IMR-90 (cell line): ENCODE measurements at regions of chr6 and their contacts with region 1.

Region 1: GRCh38 chr6:152804150-152804549 is 53.6 kb downstream of the VIP start:
- DNase-seq: no peak
- ATAC-seq: no peak
- H3K4me3 ChIP-seq: no peak overlapping the region
- H3K27ac ChIP-seq: no peak overlapping the region
- H3K4me1 ChIP-seq: no peaks in the 10 kb centered on the region
- H3K27me3 ChIP-seq: no peaks in the 10 kb centered on the region
- CTCF ChIP-seq: no peak
- POLR2A ChIP-seq: no peak
- RAD21 ChIP-seq: no peak

Region 2: GRCh38 chr6:152170705-152171667 is 633.2 kb before region 1 on chr6:
- CTCF ChIA-PET with region 1: no interaction called
- POLR2A ChIA-PET with region 1: no interaction called
- dilution Hi-C with region 1: no loop called
- in situ Hi-C with region 1: no loop called
- intact Hi-C with region 1: no loop called
- DNase-seq: peak; percentile 75
- ATAC-seq: peak; percentile 61
- H3K4me3 ChIP-seq: no peak overlapping the region
- H3K27ac ChIP-seq: no peak overlapping the region
- H3K4me1 ChIP-seq: no peaks in the 10 kb centered on the region
- H3K27me3 ChIP-seq: no peaks in the 10 kb centered on the region
- CTCF ChIP-seq: no peak
- POLR2A ChIP-seq: no peak
- RAD21 ChIP-seq: no peak

Region 3: GRCh38 chr6:152630832-152631231 is 173.3 kb before region 1 on chr6:
- CTCF ChIA-PET with region 1: no interaction called
- POLR2A ChIA-PET with region 1: no interaction called
- dilution Hi-C with region 1: no loop called
- in situ Hi-C with region 1: no loop called
- intact Hi-C with region 1: no loop called
- DNase-seq: no peak
- ATAC-seq: no peak
- H3K4me3 ChIP-seq: no peak overlapping the region
- H3K27ac ChIP-seq: no peak overlapping the region
- H3K4me1 ChIP-seq: peaks cover 6% of the 10 kb centered on the region; the same call in 1 of the 2 replicates
- H3K27me3 ChIP-seq: no peaks in the 10 kb centered on the region
- CTCF ChIP-seq: no peak
- POLR2A ChIP-seq: no peak
- RAD21 ChIP-seq: no peak

Region 4: DNA sequence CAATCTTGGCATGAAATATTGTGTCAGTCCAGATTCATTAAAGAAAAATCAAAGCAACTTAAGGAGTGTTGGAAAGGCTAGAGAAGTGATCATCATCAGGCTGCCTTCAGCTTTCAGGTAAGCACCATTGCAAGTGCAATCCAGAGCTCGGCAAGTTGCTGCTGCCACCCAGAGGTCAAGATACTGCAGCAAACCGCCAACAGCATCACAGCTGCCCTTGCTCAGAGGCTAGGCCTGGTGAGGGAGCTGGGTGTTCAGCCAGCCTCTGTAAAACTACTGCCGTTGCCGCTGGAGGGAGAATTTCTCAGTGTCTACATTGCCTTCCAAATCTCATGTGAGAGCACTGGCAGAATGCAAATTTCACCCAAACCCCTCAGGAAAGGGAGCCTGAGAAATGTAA is 161.2 kb before region 1 on chr6:
- CTCF ChIA-PET with region 1: no interaction called
- POLR2A ChIA-PET with region 1: no interaction called
- dilution Hi-C with region 1: no loop called
- in situ Hi-C with region 1: no loop called
- intact Hi-C with region 1: no loop called
- DNase-seq: peak; percentile 55
- ATAC-seq: peak; percentile 98
- H3K4me3 ChIP-seq: no peak overlapping the region
- H3K27ac ChIP-seq: no peak overlapping the region
- H3K4me1 ChIP-seq: no peaks in the 10 kb centered on the region; the same call in 1 of the 2 replicates
- H3K27me3 ChIP-seq: no peaks in the 10 kb centered on the region
- CTCF ChIP-seq: peak; percentile 53
- POLR2A ChIP-seq: no peak
- RAD21 ChIP-seq: peak; percentile 61

Region 5: DNA sequence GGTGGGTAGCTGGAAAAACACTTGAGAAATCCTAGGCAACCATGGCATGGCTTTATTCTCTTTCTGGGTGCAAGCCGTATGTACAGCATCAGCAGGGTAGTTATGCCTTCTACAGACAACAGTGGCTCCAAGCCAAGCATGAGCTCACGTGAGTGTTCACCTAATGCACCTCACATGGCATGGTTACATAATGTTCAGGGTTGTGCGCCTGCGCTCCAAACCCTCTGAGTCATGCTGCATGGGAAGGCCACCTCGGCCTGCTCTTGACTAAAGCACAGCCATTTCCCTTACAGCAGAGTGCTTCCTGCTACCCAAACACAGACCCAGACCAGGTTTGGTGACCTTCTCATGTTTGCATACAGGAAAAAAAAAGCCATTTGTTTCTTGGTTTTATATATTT is 42.7 kb after region 1 on chr6:
- CTCF ChIA-PET with region 1: no interaction called
- POLR2A ChIA-PET with region 1: no interaction called
- dilution Hi-C with region 1: no loop called
- in situ Hi-C with region 1: no loop called
- intact Hi-C with region 1: loop called (anchors 5 kb)
- DNase-seq: no peak
- ATAC-seq: no peak
- H3K4me3 ChIP-seq: no peak overlapping the region
- H3K27ac ChIP-seq: no peak overlapping the region
- H3K4me1 ChIP-seq: no peaks in the 10 kb centered on the region
- H3K27me3 ChIP-seq: no peaks in the 10 kb centered on the region; the same call in 1 of the 2 replicates
- CTCF ChIP-seq: no peak
- POLR2A ChIP-seq: no peak
- RAD21 ChIP-seq: no peak

Region 6: GRCh38 chr6:153309651-153310050 is 505.5 kb after region 1 on chr6:
- CTCF ChIA-PET with region 1: no interaction called
- POLR2A ChIA-PET with region 1: no interaction called
- dilution Hi-C with region 1: no loop called
- in situ Hi-C with region 1: no loop called
- intact Hi-C with region 1: no loop called
- DNase-seq: no peak
- ATAC-seq: no peak
- H3K4me3 ChIP-seq: no peak overlapping the region
- H3K27ac ChIP-seq: no peak overlapping the region
- H3K4me1 ChIP-seq: no peaks in the 10 kb centered on the region
- H3K27me3 ChIP-seq: no peaks in the 10 kb centered on the region
- CTCF ChIP-seq: no peak
- POLR2A ChIP-seq: no peak
- RAD21 ChIP-seq: no peak